B cell (primary cell): ENCODE measurements at regions of chr1 and their contacts with region 1.

Region 1: GRCh38 chr1:6393400-6394187 is at the start of gene ACOT7:
- DNase-seq: peak; percentile 94
- ATAC-seq: peak; percentile 90
- H3K4me3 ChIP-seq: peak within 1 kb of the TSS; percentile 51 to 80 (median 64)
- H3K4me3 Mint-ChIP-seq: peak within 1 kb of the TSS; percentile 92
- H3K27ac ChIP-seq: peak within 1 kb of the TSS; percentile 84
- H3K27ac Mint-ChIP-seq: peak within 1 kb of the TSS; percentile 97
- H3K4me1 ChIP-seq: peaks cover 15 to 20% of the 10 kb centered on the region in 2 donors
- H3K4me1 Mint-ChIP-seq: peaks cover 16% of the 10 kb centered on the region
- H3K27me3 ChIP-seq: peaks cover 0 to 15% (median 0%) of the 10 kb centered on the region in 4 experiments
- H3K27me3 Mint-ChIP-seq: no peaks in the 10 kb centered on the region
- CTCF ChIP-seq: no peak
- total RNA-seq, gene ACOT7: 4.0 and 4.2 TPM in 2 replicates

Region 2: GRCh38 chr1:5632224-5632623 is 761.4 kb before region 1 on chr1:
- CTCF ChIA-PET with region 1: no interaction called
- POLR2A ChIA-PET with region 1: interaction called, 10 read pairs
- intact Hi-C with region 1: no loop called
- DNase-seq: no peak
- ATAC-seq: no peak
- H3K4me3 ChIP-seq: no peak overlapping the region
- H3K4me3 Mint-ChIP-seq: no peak overlapping the region
- H3K27ac ChIP-seq: no peak overlapping the region
- H3K27ac Mint-ChIP-seq: no peak overlapping the region
- H3K4me1 ChIP-seq: no peaks in the 10 kb centered on the region
- H3K4me1 Mint-ChIP-seq: no peaks in the 10 kb centered on the region
- H3K27me3 ChIP-seq: no peaks in the 10 kb centered on the region
- H3K27me3 Mint-ChIP-seq: peaks cover 28% of the 10 kb centered on the region
- CTCF ChIP-seq: no peak